OCI-LY7 (cell line): ENCODE measurements at regions of chr16 and their contacts with region 1.

Region 1: GRCh38 chr16:30065143-30065850 is at the start of gene ALDOA:
- DNase-seq: peak; percentile 98
- H3K4me3 ChIP-seq: peak within 1 kb of the TSS; percentile 99
- H3K27ac ChIP-seq: peak within 1 kb of the TSS; percentile 86
- H3K4me1 ChIP-seq: peaks cover 39% of the 10 kb centered on the region
- CTCF ChIP-seq: no peak
- total RNA-seq, gene ALDOA: 646 and 809 TPM in 2 replicates

Region 2: DNA sequence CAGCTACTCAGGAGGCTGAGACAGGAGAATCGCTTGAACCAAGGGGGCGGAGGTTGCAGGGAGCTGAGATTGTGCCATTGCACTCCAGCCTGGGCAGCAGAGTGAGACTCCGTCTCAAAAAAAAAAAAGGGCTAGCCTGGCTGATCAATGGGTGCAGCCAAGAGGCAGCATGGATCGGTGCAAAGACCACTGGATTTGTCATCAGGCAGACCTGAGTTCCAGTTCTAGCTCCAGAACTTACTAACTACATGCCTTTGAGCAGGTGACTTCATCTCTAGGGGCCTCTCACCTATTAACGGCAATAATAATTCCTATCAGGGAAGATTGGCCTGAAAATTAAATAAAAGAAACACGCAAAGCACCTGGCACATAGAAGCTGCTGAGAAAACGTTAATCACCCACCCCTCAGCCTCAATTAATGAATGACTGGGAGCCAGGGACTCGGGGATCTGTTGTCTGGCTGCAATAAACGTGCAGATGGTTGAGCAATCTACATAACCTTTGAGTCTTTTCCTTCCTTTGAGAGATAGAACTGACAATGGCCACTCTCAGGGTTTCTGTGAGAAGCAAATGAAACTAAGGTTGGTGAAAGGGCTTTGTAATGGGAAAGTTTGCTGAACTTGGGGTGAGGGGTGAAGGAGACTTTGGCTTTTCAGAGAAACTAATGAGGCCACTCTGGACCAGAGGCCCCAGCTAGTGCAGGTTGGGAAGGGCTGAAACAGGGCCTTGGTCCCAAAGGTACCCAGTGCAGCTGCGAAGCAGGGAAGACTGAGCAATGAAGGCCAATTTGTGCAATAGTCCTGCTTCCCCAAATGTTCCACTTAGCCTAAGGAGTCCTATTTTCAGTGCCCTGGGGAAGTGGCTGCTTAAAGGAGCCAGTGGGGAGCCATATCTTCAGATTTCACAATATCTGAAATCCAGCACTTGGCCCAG is 173.5 kb before region 1 on chr16:
- CTCF ChIA-PET with region 1: no interaction called
- POLR2A ChIA-PET with region 1: no interaction called
- intact Hi-C with region 1: no loop called
- DNase-seq: no peak
- H3K4me3 ChIP-seq: no peak overlapping the region
- H3K27ac ChIP-seq: no peak overlapping the region
- H3K4me1 ChIP-seq: no peaks in the 10 kb centered on the region
- CTCF ChIP-seq: no peak

Region 3: DNA sequence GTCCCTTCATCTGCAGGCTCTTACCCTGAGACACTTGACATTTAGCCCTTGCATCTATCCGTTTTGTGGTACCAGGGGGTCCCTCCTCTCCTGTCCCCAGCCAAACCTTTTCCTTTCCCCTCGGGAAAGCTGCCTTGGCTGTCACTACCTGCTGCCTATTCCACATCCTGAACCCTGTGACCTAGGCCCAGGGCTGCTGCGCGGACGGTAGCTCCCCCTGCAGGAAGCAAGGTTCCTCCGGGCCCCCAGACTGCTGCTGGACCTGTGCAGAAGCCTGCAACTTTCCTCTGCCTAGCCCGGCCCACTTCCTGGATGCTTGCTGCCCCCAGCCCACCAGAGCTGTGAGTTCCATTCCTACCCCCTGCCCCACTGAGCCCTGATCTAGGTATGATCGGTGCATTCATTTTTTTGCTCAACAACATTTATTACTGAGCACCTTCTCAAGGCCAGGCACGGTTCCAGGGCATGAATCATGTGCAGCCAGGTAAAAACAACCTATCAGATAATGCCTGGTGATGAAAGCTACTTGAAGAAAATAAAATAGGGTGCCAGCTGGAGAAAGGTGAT is 10.2 kb before region 1 on chr16:
- CTCF ChIA-PET with region 1: interaction called, 4 read pairs
- POLR2A ChIA-PET with region 1: interaction called, 10 read pairs
- intact Hi-C with region 1: no loop called
- DNase-seq: peak; percentile 63
- H3K4me3 ChIP-seq: no peak overlapping the region
- H3K27ac ChIP-seq: no peak overlapping the region
- H3K4me1 ChIP-seq: peaks cover 27% of the 10 kb centered on the region
- CTCF ChIP-seq: peak; percentile 85

Region 4: GRCh38 chr16:30075507-30076275 is 10.4 kb after region 1 on chr16 and contains the start of gene PPP4C:
- CTCF ChIA-PET with region 1: interaction called, 3 read pairs
- POLR2A ChIA-PET with region 1: interaction called, 3 read pairs
- intact Hi-C with region 1: loop called (anchors 1 kb)
- DNase-seq: peak; percentile 90
- H3K4me3 ChIP-seq: peak within 1 kb of the TSS; percentile 98
- H3K27ac ChIP-seq: peak within 1 kb of the TSS; percentile 51
- H3K4me1 ChIP-seq: peaks cover 26% of the 10 kb centered on the region
- CTCF ChIP-seq: no peak
- total RNA-seq, gene PPP4C: 137 and 144 TPM in 2 replicates

Region 5: GRCh38 chr16:30355144-30355894 is 290.0 kb after region 1 on chr16 and contains the start of gene CD2BP2:
- CTCF ChIA-PET with region 1: no interaction called
- POLR2A ChIA-PET with region 1: no interaction called
- intact Hi-C with region 1: loop called (anchors 10 kb)
- DNase-seq: peak; percentile 98
- H3K4me3 ChIP-seq: peak within 1 kb of the TSS; percentile 98
- H3K27ac ChIP-seq: peak within 1 kb of the TSS; percentile 76
- H3K4me1 ChIP-seq: peaks cover 62% of the 10 kb centered on the region
- CTCF ChIP-seq: 0 out of 2 replicates have a peak, but pooled peaks have one; percentile 12
- total RNA-seq, gene CD2BP2: 69.2 and 94.7 TPM in 2 replicates